ENCODE measurements at regions of chr22 and their contacts with region 1.

Region 1: DNA sequence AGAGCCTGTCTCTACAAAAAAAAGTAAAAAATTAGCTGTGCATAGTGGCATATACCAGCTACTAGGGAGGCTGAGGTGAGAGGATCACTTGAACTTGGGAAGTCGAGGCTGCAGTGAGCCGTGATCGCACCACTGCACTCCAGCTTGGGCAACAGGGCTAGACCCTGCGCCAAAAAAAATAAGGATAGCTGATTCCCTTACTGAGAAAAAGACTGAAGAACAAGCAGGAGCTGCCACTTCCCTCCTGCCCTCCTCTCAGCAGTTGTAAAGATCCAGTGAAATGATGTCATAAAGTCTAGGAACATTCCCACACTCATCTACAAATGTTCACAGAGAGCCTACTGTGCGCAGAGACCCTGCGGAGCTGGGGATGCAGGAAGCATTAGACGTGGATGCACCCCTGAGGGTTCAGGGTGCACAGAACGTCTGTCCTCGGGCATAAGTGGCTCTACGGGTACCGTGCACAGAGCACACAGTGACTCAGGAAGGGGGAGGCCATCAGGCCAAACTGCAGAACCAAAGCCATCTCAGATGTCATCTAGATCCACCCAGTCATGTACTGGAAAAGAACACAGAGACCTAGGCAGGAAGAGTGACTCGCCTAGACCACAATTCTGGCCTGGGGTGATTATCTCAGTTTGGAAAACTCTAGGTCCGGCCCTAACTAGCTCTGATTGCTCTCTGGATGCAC is 11.7 kb downstream of the SEC14L2 start:
- DNase-seq: no peak
- ATAC-seq: no peak
- H3K4me3 ChIP-seq: no peak overlapping the region
- H3K4me3 Mint-ChIP-seq: no peak overlapping the region
- H3K27ac ChIP-seq: no peak overlapping the region
- H3K27ac Mint-ChIP-seq: peak overlapping the region in 4 of 9 donors; percentile 17 to 41 (median 22)
- H3K4me1 ChIP-seq: peaks cover 0 to 18% of the 10 kb centered on the region in 2 donors
- H3K4me1 Mint-ChIP-seq: peaks cover 12 to 37% (median 27%) of the 10 kb centered on the region in 7 donors
- H3K27me3 ChIP-seq: no peaks in the 10 kb centered on the region
- H3K27me3 Mint-ChIP-seq: no peaks in the 10 kb centered on the region

Region 2: GRCh38 chr22:30396871-30397655 is 11.5 kb before region 1 on chr22 and contains the start of gene SEC14L2:
- CTCF ChIA-PET with region 1: interaction called, 4 read pairs
- POLR2A ChIA-PET with region 1: interaction called, 52 read pairs
- intact Hi-C with region 1: no loop called
- DNase-seq: peak; percentile 26 to 73 (median 50)
- ATAC-seq: peak; percentile 81
- H3K4me3 ChIP-seq: peak within 1 kb of the TSS; percentile 71
- H3K4me3 Mint-ChIP-seq: peak within 1 kb of the TSS; percentile 85 to 95 (median 90)
- H3K27ac ChIP-seq: peak within 1 kb of the TSS; percentile 77
- H3K27ac Mint-ChIP-seq: peak within 1 kb of the TSS; percentile 77 to 94 (median 91)
- H3K4me1 ChIP-seq: peaks cover 12 to 22% of the 10 kb centered on the region in 2 donors
- H3K4me1 Mint-ChIP-seq: peaks cover 29 to 69% (median 46%) of the 10 kb centered on the region in 7 donors
- H3K27me3 ChIP-seq: no peaks in the 10 kb centered on the region
- H3K27me3 Mint-ChIP-seq: peaks cover 0 to 5% (median 0%) of the 10 kb centered on the region in 5 donors
- total RNA-seq, gene SEC14L2: 10.7 to 147 (median 16.5) TPM